Mammary epithelial cell (primary cell): ENCODE measurements at regions of chr11 and their contacts with region 1.

Region 1: DNA sequence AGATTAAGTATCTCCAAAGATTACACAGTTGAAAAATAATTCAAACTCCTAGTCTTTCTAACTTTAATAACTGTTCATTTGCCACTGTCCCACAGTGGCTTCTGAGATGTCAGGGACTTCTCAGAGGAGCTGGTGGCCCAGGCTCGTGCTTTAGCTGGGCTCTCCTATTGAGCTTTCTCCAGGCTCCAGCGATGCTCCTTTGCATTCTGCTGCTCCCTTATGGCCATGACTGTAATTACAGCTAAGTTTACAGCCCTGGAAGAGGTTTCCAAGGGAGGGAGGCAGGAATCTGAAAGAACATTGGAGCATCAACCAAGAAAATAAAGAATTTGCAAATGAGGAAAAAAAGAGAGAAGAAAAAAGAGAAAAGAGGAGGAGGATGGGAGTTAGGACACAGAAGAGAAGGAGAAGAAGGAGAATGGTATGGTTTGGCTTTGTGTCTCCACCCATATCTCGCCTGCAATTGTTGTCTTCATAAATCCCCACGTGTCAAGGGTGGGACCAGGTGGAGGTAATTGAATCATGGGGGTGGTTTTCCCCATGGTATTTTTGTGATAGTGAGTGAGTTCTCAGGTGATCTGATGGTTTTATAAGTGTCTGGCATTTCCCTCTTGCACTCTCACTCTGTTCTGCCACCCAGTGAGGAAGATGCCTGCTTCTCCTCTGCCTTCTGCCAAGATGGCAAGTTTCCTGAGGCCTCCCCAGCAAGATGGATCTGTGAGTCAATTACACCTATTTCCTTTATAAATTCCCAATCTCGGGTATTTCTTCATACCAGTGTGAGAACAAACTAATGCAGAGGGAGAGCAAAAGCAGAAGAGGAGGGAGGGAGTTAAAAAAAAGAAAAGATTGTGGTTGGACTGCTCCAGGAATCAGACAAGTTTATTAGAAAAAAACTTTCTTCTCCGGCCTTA is 857.0 kb downstream of the KCNA4 start:
- DNase-seq: peak; percentile 55
- H3K4me3 ChIP-seq: no peak overlapping the region
- H3K27ac ChIP-seq: no peak overlapping the region
- H3K4me1 ChIP-seq: peaks cover 4% of the 10 kb centered on the region
- H3K27me3 ChIP-seq: no peaks in the 10 kb centered on the region
- CTCF ChIP-seq: peak; percentile 81 to 91

Region 2: DNA sequence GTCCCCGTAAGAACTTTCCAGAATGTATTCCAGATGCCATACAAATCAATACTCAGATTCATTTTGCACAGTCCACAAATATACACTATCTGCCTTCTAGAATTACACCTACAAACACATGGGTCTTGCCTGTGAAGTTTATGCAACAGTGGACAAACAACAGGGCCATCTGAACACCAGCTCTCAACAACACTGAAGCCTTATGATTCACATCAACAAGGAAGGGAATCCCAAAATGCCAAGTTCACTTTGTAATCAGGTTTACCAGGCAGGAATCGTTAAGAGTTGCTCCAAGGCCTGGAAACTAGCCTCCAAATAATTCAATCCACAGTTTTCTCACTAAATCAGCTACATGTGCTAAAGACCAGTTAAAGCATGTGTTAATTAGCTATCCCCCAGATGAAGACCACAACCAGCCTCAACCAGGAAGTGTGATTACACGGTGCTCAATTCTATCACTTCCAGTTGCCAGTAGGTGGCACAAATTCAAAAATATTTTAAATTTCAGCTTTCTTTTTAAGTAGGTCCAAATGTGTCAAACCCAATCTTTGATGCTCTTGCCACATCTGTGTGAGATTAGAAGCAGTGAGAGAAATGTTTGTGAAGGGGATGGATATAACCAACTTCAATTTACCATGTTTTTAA is 1320.5 kb before region 1 on chr11:
- CTCF ChIA-PET with region 1: interaction called, 6 read pairs
- dilution Hi-C with region 1: no loop called
- in situ Hi-C with region 1: no loop called
- intact Hi-C with region 1: loop called (anchors 1 kb)
- DNase-seq: no peak
- H3K4me3 ChIP-seq: no peak overlapping the region
- H3K27ac ChIP-seq: no peak overlapping the region
- H3K4me1 ChIP-seq: no peaks in the 10 kb centered on the region
- H3K27me3 ChIP-seq: no peaks in the 10 kb centered on the region
- CTCF ChIP-seq: peak; percentile 49 to 54

Region 3: GRCh38 chr11:28903716-28904115 is 256.1 kb before region 1 on chr11:
- CTCF ChIA-PET with region 1: no interaction called
- dilution Hi-C with region 1: no loop called
- in situ Hi-C with region 1: no loop called
- intact Hi-C with region 1: no loop called
- DNase-seq: no peak
- H3K4me3 ChIP-seq: no peak overlapping the region
- H3K27ac ChIP-seq: no peak overlapping the region
- H3K4me1 ChIP-seq: no peaks in the 10 kb centered on the region
- H3K27me3 ChIP-seq: no peaks in the 10 kb centered on the region
- CTCF ChIP-seq: no peak

Region 4: DNA sequence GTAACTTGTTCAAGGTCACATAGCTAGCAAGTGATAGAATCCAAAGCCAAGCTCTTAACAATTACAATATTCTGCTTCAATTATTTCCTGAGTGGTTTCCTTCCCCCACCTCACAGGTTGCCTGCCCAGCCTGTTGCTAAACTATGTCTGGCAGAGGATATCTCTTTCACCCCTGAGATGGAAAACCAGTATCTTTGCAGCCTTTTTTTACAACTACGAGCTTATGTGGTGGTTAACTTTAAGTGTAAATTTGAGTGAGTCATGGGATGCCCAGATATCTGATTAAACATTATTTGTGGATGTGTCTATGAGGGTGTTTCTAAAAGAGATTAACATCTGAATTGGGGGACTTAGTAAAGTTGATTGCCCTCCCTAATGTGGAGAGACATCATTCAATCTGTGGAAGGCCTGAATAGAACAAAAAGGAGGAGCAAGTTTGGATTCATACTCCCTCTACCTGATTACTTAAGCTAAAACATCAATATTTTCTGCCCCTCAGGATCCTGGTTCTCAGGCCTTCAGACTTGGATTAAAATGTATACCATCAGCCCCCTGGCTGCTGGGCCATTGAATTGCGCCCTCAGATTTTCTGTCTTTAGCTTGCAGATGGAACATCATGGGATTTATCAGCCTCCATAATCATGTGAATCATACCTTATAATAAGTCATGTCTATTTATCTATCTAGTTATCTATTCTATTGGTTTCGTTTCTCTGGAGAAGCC is 139.7 kb before region 1 on chr11:
- CTCF ChIA-PET with region 1: no interaction called
- dilution Hi-C with region 1: no loop called
- in situ Hi-C with region 1: no loop called
- intact Hi-C with region 1: loop called (anchors 1 kb)
- DNase-seq: peak; percentile 21
- H3K4me3 ChIP-seq: no peak overlapping the region
- H3K27ac ChIP-seq: no peak overlapping the region
- H3K4me1 ChIP-seq: peaks cover 35% of the 10 kb centered on the region
- H3K27me3 ChIP-seq: no peaks in the 10 kb centered on the region
- CTCF ChIP-seq: peak; percentile 60 to 67

Region 5: GRCh38 chr11:29328961-29329441 is 169.2 kb after region 1 on chr11:
- CTCF ChIA-PET with region 1: no interaction called
- dilution Hi-C with region 1: no loop called
- in situ Hi-C with region 1: loop called in 1 of 2 experiments (anchors 25 kb)
- intact Hi-C with region 1: loop called (anchors 1 kb)
- DNase-seq: peak; percentile 92
- H3K4me3 ChIP-seq: no peak overlapping the region
- H3K27ac ChIP-seq: peak overlapping the region; percentile 45
- H3K4me1 ChIP-seq: peaks cover 22% of the 10 kb centered on the region
- H3K27me3 ChIP-seq: no peaks in the 10 kb centered on the region
- CTCF ChIP-seq: peak; percentile 78 to 82

Region 6: GRCh38 chr11:29343465-29344333 is 183.9 kb after region 1 on chr11:
- CTCF ChIA-PET with region 1: no interaction called
- dilution Hi-C with region 1: no loop called
- in situ Hi-C with region 1: loop called in 1 of 2 experiments (anchors 25 kb)
- intact Hi-C with region 1: no loop called
- DNase-seq: peak; percentile 40
- H3K4me3 ChIP-seq: peak overlapping the region in 1 of 3 experiments; percentile 26
- H3K27ac ChIP-seq: no peak overlapping the region
- H3K4me1 ChIP-seq: no peaks in the 10 kb centered on the region
- H3K27me3 ChIP-seq: no peaks in the 10 kb centered on the region
- CTCF ChIP-seq: peak; percentile 97 to 100

Region 7: DNA sequence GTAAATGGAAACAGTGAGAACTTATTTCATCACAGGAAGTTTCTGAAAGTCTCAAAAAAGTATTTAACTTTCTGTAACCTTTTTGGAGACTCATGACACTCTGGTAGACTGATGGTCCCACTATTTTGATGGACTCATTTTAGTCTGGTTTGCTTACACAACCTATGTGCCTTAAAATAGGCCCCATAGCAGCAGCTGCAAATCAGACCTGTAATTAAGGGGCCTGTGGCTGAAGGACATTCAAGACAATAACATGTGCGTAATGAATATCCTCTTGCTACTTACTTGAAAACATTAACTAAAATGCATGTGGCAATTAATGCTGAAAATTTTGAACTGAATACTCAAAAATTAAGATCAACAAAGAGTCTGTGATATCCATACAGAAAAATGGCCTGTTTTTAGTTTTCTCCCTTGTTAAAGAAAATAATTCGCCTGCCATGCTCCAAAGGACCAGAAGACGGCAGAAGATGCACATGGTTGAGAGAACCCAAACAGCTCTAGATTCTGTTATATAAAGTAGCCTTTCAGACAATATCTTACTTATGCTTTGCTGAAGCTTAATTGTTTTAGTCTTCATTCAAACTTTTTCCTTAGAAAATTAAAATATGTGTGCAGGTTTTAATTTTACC is 288.6 kb after region 1 on chr11:
- CTCF ChIA-PET with region 1: no interaction called
- dilution Hi-C with region 1: no loop called
- in situ Hi-C with region 1: no loop called
- intact Hi-C with region 1: no loop called
- DNase-seq: peak; percentile 3
- H3K4me3 ChIP-seq: no peak overlapping the region
- H3K27ac ChIP-seq: no peak overlapping the region
- H3K4me1 ChIP-seq: peaks cover 4% of the 10 kb centered on the region
- H3K27me3 ChIP-seq: peaks cover 2% of the 10 kb centered on the region
- CTCF ChIP-seq: peak; percentile 55 to 75